H1 (cell line): ENCODE measurements at regions of chr4 and their contacts with region 1.

Region 1: GRCh38 chr4:42768125-42768748 is 111.3 kb upstream of the ATP8A1 start:
- DNase-seq: peak in 1 of 2 experiments; percentile 77
- H3K4me3 ChIP-seq: no peak overlapping the region
- H3K27ac ChIP-seq: no peak overlapping the region
- H3K4me1 ChIP-seq: no peaks in the 10 kb centered on the region
- H3K27me3 ChIP-seq: no peaks in the 10 kb centered on the region
- CTCF ChIP-seq: peak; percentile 53 to 59 (median 54)
- EP300 ChIP-seq: no peak
- POLR2A ChIP-seq: no peak
- RAD21 ChIP-seq: peak; percentile 38 to 50; a peak in 3 of 4 replicates

Region 2: DNA sequence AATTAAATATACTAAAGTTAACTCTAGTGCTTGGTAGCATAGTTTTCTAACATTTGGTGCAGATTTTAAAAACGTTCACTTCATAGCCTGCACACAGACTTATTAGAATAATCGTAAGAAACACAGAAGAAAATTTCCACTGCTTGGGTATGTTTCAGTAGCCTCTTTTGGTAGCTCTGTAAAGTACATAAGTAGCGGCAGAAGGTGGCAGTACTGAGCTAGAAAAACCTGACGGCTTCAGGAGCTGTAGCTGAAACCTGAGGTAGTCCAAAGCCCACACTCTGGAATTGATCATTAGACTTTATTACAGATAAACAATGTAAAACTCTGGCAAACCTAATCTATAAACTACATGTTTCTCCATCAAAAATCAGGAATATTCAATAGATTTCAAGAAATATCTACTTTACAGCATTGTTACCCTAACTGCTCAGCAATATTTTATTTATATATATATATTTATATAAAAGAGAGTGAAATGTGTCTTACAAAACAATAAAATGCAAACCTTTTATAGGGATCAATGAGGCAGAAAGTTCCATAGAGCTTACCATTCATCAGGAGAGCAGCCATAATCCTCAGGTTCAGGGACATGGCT is 199.5 kb before region 1 on chr4:
- CTCF ChIA-PET with region 1: interaction called, 11 read pairs
- POLR2A ChIA-PET with region 1: no interaction called
- DNase-seq: peak; percentile 9 to 54
- H3K4me3 ChIP-seq: no peak overlapping the region
- H3K27ac ChIP-seq: no peak overlapping the region
- H3K4me1 ChIP-seq: no peaks in the 10 kb centered on the region
- H3K27me3 ChIP-seq: no peaks in the 10 kb centered on the region
- CTCF ChIP-seq: peak in 2 of 3 experiments; percentile 68 to 79; a peak in 3 of 4 replicates
- EP300 ChIP-seq: no peak
- POLR2A ChIP-seq: no peak
- RAD21 ChIP-seq: peak; percentile 88 to 91

Region 3: DNA sequence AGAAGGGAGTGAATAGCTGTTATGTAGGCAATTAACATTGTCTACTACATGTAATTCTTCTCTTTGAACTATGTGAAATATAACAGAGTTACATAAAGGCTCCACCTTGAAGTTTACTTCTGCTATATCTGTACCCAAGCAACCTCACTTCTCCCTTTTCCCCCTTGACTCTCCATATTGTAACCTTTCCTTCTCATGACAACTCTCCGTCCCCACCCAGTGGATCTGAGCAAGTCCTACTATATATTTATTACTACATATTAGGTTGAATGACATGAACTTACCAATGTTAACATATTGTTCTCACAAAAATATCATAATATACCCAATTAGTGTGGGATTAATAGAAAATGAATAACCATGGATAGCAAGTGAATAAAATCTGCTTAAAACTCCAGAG is 18.1 kb before region 1 on chr4:
- CTCF ChIA-PET with region 1: interaction called, 10 read pairs
- POLR2A ChIA-PET with region 1: no interaction called
- DNase-seq: no peak
- H3K4me3 ChIP-seq: no peak overlapping the region
- H3K27ac ChIP-seq: no peak overlapping the region
- H3K4me1 ChIP-seq: no peaks in the 10 kb centered on the region
- H3K27me3 ChIP-seq: no peaks in the 10 kb centered on the region
- CTCF ChIP-seq: peak in 2 of 3 experiments; percentile 29 to 43; a peak in 2 of 4 replicates
- EP300 ChIP-seq: no peak
- POLR2A ChIP-seq: no peak
- RAD21 ChIP-seq: peak; percentile 67 to 74

Region 4: GRCh38 chr4:42778349-42778748 is 10.1 kb after region 1 on chr4:
- CTCF ChIA-PET with region 1: interaction called, 15 read pairs
- POLR2A ChIA-PET with region 1: no interaction called
- DNase-seq: no peak
- H3K4me3 ChIP-seq: no peak overlapping the region
- H3K27ac ChIP-seq: no peak overlapping the region
- H3K4me1 ChIP-seq: no peaks in the 10 kb centered on the region
- H3K27me3 ChIP-seq: no peaks in the 10 kb centered on the region
- CTCF ChIP-seq: no peak
- EP300 ChIP-seq: no peak
- POLR2A ChIP-seq: no peak
- RAD21 ChIP-seq: no peak

Region 5: DNA sequence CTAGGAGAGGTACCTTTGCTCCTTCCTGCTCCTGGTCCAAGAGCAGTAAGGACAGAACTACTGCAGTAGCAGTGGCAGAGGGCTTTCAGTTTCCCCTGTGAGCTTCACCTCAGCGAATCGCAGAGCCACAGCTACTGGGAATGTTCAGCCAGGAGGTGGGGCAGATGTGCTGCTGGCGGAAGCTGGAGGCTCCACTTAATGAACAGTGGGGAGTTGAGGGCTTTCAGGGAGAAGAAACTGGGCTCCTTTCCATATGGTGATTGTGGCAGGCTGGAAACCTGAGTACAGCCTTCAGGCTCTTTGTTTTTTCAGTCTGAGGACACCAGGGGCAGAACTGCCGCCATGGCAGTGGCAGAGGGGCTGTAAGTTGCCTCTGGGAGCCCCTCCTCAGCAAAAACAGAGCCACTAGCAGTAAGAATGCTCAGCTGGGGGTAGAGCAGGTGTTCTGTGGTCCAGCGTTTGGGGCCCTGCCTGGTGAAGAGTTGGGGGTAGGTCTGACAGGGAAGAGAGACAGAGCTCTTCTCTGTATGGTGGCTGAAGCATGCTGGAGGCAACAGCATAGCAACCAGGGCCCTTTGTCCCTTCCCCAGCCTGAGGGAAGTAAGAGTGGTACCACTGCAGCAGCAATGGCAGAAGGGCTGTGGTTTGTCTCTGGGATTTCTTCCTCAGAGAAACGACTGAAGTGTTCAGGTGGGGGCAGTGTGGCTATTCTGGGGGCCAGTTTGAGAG is 18.3 kb after region 1 on chr4:
- CTCF ChIA-PET with region 1: interaction called, 15 read pairs
- POLR2A ChIA-PET with region 1: no interaction called
- DNase-seq: peak in 1 of 2 experiments; percentile 55
- H3K4me3 ChIP-seq: no peak overlapping the region
- H3K27ac ChIP-seq: peak overlapping the region; percentile 30; the same call in 1 of the 2 replicates
- H3K4me1 ChIP-seq: peaks cover 0 to 12% (median 0%) of the 10 kb centered on the region in 4 experiments; a peak in 2 of 7 replicates
- H3K27me3 ChIP-seq: no peaks in the 10 kb centered on the region; a peak in 1 of 7 replicates
- CTCF ChIP-seq: peak in 2 of 3 experiments; percentile 22 to 26; a peak in 2 of 4 replicates
- EP300 ChIP-seq: no peak
- POLR2A ChIP-seq: no peak
- RAD21 ChIP-seq: peak; percentile 46 to 51

Region 6: DNA sequence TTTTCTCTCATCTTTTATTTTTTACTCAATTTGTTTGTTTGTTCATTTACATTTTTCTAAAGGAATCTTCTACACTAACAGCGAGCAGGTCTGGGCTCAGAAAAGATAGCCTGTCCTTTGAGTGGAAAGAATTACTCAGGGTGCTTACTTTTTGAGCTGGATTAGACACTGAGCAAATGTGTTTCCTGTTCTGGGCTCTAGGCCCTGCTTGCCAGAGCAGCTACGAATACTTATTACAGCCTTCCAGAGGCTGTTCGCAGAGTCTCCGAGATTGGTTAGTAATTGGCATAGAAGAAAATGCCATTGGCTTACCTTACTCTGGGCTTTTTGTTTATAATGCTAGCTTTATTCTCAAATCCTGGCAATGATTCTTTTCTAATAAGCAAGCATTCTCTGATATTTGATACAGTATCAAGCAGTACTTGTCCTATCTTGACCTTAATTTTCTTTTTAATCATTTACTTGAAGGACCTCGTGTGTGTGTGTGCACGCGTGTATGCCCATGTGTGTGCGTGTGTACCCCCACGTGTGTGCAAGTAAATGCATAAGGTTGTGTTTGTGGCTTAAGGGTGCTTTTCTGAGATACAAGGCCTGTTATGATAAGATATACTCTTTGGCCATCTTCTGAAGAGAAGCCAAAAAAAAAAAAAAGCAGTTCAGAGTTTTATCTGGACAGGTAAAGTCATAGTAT is 48.1 kb after region 1 on chr4:
- CTCF ChIA-PET with region 1: interaction called, 15 read pairs
- POLR2A ChIA-PET with region 1: no interaction called
- DNase-seq: no peak
- H3K4me3 ChIP-seq: no peak overlapping the region
- H3K27ac ChIP-seq: no peak overlapping the region
- H3K4me1 ChIP-seq: no peaks in the 10 kb centered on the region
- H3K27me3 ChIP-seq: no peaks in the 10 kb centered on the region
- CTCF ChIP-seq: no peak
- EP300 ChIP-seq: no peak
- POLR2A ChIP-seq: no peak
- RAD21 ChIP-seq: no peak

Region 7: GRCh38 chr4:42855779-42856178 is 87.5 kb after region 1 on chr4:
- CTCF ChIA-PET with region 1: no interaction called
- POLR2A ChIA-PET with region 1: no interaction called
- DNase-seq: no peak
- H3K4me3 ChIP-seq: no peak overlapping the region
- H3K27ac ChIP-seq: no peak overlapping the region
- H3K4me1 ChIP-seq: no peaks in the 10 kb centered on the region
- H3K27me3 ChIP-seq: no peaks in the 10 kb centered on the region
- CTCF ChIP-seq: no peak
- EP300 ChIP-seq: no peak
- POLR2A ChIP-seq: no peak
- RAD21 ChIP-seq: no peak